Mammary epithelial cell (primary cell): ENCODE measurements at regions of chr11 and their contacts with region 1.

Region 1: DNA sequence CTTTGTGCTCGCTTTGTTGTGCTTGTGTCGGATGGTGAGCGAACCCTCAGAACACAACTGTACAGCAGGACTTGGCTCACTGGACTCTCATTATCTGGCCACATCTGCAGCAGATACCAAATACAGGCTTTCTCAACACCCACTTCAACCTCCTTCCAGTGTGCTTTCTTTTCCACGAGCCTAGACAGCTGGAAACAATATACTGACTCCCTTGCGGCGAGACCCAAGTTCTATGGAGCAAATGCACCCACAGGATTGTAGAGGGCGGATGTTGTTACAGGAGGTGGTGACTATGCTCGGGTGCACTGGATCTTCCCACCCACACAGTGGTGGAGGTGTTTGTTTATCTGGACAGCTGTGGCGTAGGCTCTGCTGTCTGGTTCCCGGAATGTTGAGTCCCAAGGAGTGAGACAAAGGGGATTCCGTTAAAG is 204.3 kb downstream of the TENM4 start:
- DNase-seq: peak; percentile 64
- H3K4me3 ChIP-seq: no peak overlapping the region
- H3K27ac ChIP-seq: peak overlapping the region; percentile 20
- H3K4me1 ChIP-seq: peaks cover 26% of the 10 kb centered on the region
- H3K27me3 ChIP-seq: no peaks in the 10 kb centered on the region
- CTCF ChIP-seq: no peak

Region 2: GRCh38 chr11:79201637-79202333 is 34.8 kb before region 1 on chr11:
- CTCF ChIA-PET with region 1: no interaction called
- dilution Hi-C with region 1: loop called (anchors 5 kb)
- in situ Hi-C with region 1: no loop called
- intact Hi-C with region 1: no loop called
- DNase-seq: peak; percentile 79
- H3K4me3 ChIP-seq: no peak overlapping the region
- H3K27ac ChIP-seq: no peak overlapping the region
- H3K4me1 ChIP-seq: peaks cover 10% of the 10 kb centered on the region
- H3K27me3 ChIP-seq: no peaks in the 10 kb centered on the region
- CTCF ChIP-seq: no peak